ENCODE measurements at regions of chr11 and their contacts with region 1.

Region 1: GRCh38 chr11:60477035-60477445 is 15.5 kb upstream of the MS4A12 start:
- DNase-seq: no peak
- ATAC-seq: peak in 3 of 8 donors; percentile 38 to 62 (median 53)
- H3K4me3 ChIP-seq: no peak overlapping the region
- H3K27ac ChIP-seq: peak overlapping the region in 1 of 10 donors; percentile 73
- H3K4me1 ChIP-seq: peaks cover 0 to under 1% (median 0%) of the 10 kb centered on the region in 9 donors
- H3K27me3 ChIP-seq: no peaks in the 10 kb centered on the region
- CTCF ChIP-seq: no peak

Region 2: DNA sequence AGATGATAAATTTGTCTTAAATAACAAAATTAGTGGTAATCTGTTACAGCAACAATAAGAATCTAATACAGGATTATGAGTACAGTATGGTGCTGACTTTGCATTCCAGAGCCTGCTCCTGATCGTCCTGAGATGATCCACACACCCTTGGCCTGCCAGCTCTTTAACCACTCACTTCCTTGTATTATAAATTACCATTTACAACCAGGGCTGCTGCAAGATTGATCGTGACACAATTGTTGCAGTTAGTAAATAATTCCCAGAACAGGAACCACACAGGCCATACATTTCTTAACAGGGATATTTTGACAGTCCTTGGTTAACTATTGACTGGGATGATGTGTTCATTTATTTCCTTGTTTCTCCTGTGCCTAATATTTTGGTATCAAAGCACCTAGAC is 627.9 kb before region 1 on chr11:
- intact Hi-C with region 1: no loop called
- DNase-seq: no peak
- ATAC-seq: no peak
- H3K4me3 ChIP-seq: no peak overlapping the region
- H3K27ac ChIP-seq: no peak overlapping the region
- H3K4me1 ChIP-seq: no peaks in the 10 kb centered on the region
- H3K27me3 ChIP-seq: no peaks in the 10 kb centered on the region
- CTCF ChIP-seq: no peak

Region 3: DNA sequence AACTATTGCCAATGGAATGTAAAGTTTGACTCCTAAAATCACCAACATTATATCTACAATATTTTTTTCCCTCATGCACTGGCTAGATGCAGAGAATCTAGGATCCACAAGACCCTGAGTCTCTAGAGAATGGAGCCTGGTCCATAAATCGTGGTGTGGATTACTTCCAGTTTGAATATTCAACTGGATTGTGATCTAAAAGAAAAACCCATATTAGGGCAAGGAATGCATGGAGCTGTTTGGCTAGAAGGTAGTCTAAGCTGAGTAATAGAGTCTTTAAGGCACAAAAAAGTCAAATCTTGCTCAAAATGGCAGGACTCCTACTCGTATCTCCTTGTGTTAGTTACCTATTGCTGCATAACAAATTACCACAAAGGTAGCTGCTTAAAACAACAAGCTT is 57.0 kb before region 1 on chr11:
- intact Hi-C with region 1: loop called in 1 of 10 experiments (anchors 10 kb)
- DNase-seq: no peak
- ATAC-seq: no peak
- H3K4me3 ChIP-seq: no peak overlapping the region
- H3K27ac ChIP-seq: no peak overlapping the region
- H3K4me1 ChIP-seq: no peaks in the 10 kb centered on the region
- H3K27me3 ChIP-seq: no peaks in the 10 kb centered on the region
- CTCF ChIP-seq: no peak

Measured in heart right ventricle (tissue), 16 donors.